Activated CD8-positive, alpha-beta T cell treated with anti-CD3 and anti-CD28 coated beads for 36 hours (primary cell): ENCODE measurements at regions of chr1 and their contacts with region 1.

Region 1: DNA sequence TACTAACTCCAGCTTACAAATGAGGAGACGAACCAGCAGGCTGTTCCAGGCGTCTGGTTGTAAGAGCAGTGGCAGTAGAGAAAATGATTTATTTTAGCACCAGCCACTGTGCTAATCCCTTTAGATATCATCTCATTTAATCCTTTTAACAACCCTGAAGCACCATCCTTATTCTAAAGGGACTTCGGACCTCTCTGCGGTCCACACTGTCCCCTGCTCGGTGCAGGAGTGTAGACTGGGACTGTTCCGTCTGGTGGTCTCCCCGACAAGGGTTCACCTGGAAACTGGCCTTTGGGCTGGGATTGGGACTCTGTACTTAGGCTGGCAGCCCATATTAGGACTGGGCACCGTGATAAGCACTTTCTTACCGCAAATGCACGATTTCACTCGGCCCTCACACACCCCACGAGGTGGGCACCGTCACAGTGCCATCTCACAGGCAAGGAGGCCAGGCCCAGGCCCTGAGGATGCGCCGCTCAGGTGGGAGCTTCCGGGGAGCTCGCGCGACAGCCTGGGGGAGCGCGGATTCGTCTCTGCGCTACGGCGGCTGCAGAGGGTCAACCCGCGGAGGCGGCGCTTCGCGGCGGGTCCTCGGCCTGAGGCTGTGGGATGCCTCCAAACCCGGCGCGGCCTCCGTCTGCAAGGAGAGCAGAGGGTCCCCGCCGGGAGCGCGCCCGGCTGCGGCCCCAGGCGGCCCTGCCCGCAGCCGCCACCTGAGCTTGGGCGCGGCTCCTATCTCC is 45.2 kb downstream of the ATP1A1 start:
- DNase-seq: peak; percentile 91
- ATAC-seq: peak; percentile 95
- H3K4me3 Mint-ChIP-seq: peak overlapping the region; percentile 91
- H3K27ac Mint-ChIP-seq: peak overlapping the region; percentile 91
- H3K4me1 Mint-ChIP-seq: peaks cover 43% of the 10 kb centered on the region
- H3K27me3 Mint-ChIP-seq: no peaks in the 10 kb centered on the region
- CTCF ChIP-seq: no peak

Region 2: DNA sequence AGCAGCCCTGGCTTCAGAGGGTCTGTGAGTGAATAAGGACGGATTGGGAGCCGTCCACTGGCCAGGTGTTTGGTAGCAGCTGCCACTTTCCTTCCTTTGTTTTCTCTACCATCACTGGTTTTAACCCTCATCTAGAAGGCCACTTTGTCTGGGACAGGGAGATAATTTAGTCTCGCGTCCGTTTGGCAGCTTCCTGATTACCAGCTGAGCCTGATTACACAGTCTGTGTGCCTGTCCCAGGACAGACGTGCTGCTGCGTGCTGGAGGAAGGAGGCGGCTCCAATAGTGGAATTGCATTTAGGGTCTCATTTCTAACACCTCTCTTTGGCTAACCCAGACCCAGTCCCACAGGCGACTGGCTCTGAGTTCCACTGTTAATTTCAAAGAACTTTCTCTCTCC is 625.1 kb before region 1 on chr1:
- CTCF ChIA-PET with region 1: no interaction called
- POLR2A ChIA-PET with region 1: no interaction called
- intact Hi-C with region 1: no loop called
- DNase-seq: no peak
- ATAC-seq: no peak
- H3K4me3 Mint-ChIP-seq: no peak overlapping the region
- H3K27ac Mint-ChIP-seq: no peak overlapping the region
- H3K4me1 Mint-ChIP-seq: no peaks in the 10 kb centered on the region
- H3K27me3 Mint-ChIP-seq: peaks cover 20% of the 10 kb centered on the region
- CTCF ChIP-seq: no peak

Region 3: DNA sequence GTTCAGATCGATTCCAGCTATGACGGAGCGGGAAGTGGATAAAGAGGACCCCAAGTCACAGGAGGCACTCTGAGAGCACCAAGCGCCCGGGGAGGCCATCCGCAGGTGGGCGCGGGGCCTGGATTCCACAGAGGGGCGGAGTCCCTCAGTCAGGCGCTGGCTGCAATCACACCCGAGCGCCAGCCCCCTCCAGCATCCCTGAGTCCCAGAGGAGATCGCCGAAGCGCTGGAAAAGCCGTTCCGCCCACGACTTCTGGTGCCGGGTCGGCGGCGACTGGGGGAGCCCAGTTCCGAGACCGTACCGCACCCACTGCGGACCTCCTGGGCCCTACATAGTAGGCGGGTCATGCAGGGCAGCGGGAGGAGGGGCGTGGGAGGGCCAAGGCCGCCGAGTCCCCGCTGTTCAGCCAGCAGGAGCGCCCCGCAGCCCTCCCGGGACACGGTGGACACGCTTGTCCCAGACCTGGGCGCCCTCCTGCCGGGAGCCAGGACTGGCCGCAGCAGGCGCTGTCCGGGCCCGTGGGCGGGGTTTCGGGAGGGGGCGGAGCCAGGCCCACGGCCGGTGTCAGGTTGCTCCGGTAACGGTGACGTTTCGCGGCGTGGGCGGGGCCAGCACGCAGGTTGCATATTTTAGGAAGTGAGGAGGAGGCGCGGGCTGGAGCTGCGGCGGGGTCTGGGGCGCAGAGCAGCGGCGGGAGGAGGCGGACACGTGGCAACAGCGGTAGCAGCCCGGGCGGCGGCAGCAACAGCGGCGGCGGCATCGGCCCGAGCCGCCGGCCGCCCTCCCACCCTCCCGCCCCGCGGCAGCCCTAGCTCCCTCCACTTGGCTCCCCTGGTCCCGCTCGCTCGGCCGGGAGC is 45.4 kb before region 1 on chr1 and contains the start of gene ATP1A1:
- CTCF ChIA-PET with region 1: no interaction called
- POLR2A ChIA-PET with region 1: interaction called, 24 read pairs
- intact Hi-C with region 1: no loop called
- DNase-seq: peak; percentile 99
- ATAC-seq: peak; percentile 66
- H3K4me3 Mint-ChIP-seq: peak within 1 kb of the TSS; percentile 97
- H3K27ac Mint-ChIP-seq: peak within 1 kb of the TSS; percentile 94
- H3K4me1 Mint-ChIP-seq: peaks cover 33% of the 10 kb centered on the region
- H3K27me3 Mint-ChIP-seq: peaks cover 2% of the 10 kb centered on the region
- CTCF ChIP-seq: no peak
- total RNA-seq, gene ATP1A1: 201 to 202 TPM

Region 4: DNA sequence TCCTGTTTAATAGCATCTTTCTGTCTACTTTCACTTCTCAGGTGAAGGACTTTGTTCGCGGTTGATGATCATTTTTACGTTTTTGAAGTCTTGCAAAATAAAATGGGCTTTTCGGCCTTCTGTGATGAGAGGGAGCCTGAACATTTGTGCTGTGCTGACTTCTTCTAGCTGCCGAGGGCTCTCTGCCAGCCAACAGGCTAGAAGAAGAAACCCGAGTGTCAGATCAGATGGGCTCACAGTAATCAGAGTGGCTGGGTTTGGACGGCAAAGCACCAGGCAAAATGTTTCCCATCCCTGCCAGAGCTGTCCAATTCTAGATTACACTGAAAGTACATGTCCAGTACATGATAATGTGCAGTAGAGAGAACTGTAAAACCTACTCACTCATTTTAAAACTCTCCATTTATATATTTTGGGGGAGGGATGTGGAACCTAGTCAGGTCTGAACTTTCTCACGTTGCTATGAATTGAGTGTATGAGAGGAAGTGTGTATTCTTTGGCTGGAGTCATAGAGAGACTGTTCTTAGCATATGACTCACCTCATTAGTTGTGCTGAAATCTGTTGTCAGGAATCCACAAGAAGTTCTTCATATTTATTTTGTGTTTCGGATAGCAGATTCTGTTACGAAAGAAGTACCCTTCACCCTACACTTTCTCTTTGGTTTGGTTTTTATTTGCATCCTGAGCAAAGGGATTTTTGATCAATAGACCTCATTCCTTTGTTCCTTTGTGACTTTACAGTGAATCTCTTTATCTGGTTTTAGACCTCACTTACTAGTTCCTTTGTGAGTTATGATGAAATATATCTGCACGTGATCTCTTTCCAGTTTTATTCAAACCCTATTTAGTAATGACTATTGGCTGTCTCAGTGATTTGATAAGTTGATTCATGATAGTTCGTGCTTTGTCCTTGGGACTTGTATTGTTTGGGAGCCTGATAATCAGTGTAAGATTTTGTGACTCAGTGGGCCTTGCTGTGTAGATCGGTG is 40.4 kb before region 1 on chr1:
- CTCF ChIA-PET with region 1: interaction called, 3 read pairs
- POLR2A ChIA-PET with region 1: interaction called, 24 read pairs
- intact Hi-C with region 1: no loop called
- DNase-seq: peak; percentile 54
- ATAC-seq: peak; percentile 72
- H3K4me3 Mint-ChIP-seq: peak overlapping the region; percentile 97
- H3K27ac Mint-ChIP-seq: peak overlapping the region; percentile 90
- H3K4me1 Mint-ChIP-seq: peaks cover 74% of the 10 kb centered on the region
- H3K27me3 Mint-ChIP-seq: no peaks in the 10 kb centered on the region
- CTCF ChIP-seq: no peak